Ascending aorta (tissue), 2 donors: ENCODE measurements at regions of chr4 and their contacts with region 1.

Region 1: GRCh38 chr4:158172261-158173258 is at the start of gene GASK1B:
- DNase-seq: no peak
- H3K4me3 ChIP-seq: peak within 1 kb of the TSS; percentile 68 to 88
- H3K27ac ChIP-seq: peak within 1 kb of the TSS; percentile 88 to 97
- H3K4me1 ChIP-seq: peaks cover 3 to 43% of the 10 kb centered on the region in 2 donors
- H3K27me3 ChIP-seq: no peaks in the 10 kb centered on the region
- CTCF ChIP-seq: peak; percentile 43 to 66 (median 46)
- total RNA-seq, gene GASK1B: 69.7 TPM

Region 2: DNA sequence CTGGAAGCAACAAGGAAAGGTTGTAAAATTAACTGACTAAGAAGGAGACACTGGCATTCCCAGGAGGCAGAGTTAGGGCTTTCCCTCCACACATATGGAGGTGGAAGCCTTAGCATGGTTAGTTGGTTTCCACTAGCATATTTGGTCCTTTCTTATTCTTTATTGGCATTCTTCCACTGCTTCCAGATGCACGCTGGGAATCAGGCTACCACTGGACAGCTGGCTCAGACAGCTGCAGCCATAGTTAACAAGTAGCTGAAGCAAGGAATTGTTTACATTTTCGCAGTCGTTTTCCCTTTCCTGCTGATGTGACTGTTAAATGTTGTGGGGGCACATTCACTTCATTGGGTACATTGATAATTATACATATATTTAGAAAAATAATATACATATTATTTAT is 782.8 kb before region 1 on chr4:
- intact Hi-C with region 1: loop called (anchors 5 kb)
- DNase-seq: no peak
- H3K4me3 ChIP-seq: no peak overlapping the region
- H3K27ac ChIP-seq: no peak overlapping the region
- H3K4me1 ChIP-seq: no peaks in the 10 kb centered on the region
- H3K27me3 ChIP-seq: no peaks in the 10 kb centered on the region
- CTCF ChIP-seq: no peak

Region 3: DNA sequence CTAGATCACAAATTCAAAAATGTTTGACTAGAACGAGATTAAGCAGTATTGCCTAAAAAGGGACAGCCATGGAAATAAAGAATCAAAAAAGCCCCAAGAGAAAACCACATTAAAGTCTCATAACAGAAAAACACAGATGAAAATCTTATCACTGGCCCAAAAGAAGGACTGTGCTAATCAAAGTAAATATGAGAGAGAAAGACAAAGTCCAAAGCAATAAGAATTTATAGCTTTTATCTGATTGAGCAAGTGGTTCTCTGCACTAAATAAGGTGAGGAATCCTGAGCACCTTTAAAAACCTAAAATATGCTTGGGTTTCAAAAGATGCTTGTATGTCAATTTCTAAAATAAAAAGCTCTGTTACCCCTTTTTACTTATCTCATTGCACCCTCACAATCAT is 409.1 kb before region 1 on chr4:
- intact Hi-C with region 1: no loop called
- DNase-seq: no peak
- H3K4me3 ChIP-seq: no peak overlapping the region
- H3K27ac ChIP-seq: no peak overlapping the region
- H3K4me1 ChIP-seq: no peaks in the 10 kb centered on the region
- H3K27me3 ChIP-seq: no peaks in the 10 kb centered on the region
- CTCF ChIP-seq: no peak

Region 4: GRCh38 chr4:158121187-158121586 is 51.4 kb before region 1 on chr4:
- intact Hi-C with region 1: loop called (anchors 2 kb)
- DNase-seq: peak in 1 of 2 donors; percentile 80
- H3K4me3 ChIP-seq: peak overlapping the region in 1 of 2 donors; percentile 50
- H3K27ac ChIP-seq: peak overlapping the region; percentile 69 to 78
- H3K4me1 ChIP-seq: peaks cover 0 to 21% of the 10 kb centered on the region in 2 donors
- H3K27me3 ChIP-seq: no peaks in the 10 kb centered on the region
- CTCF ChIP-seq: no peak

Region 5: GRCh38 chr4:158253350-158253980 is 80.9 kb after region 1 on chr4:
- intact Hi-C with region 1: loop called (anchors 5 kb)
- DNase-seq: peak in 1 of 2 donors; percentile 72
- H3K4me3 ChIP-seq: peak overlapping the region in 1 of 2 donors; percentile 2
- H3K27ac ChIP-seq: peak overlapping the region; percentile 40 to 49
- H3K4me1 ChIP-seq: no peaks in the 10 kb centered on the region
- H3K27me3 ChIP-seq: no peaks in the 10 kb centered on the region
- CTCF ChIP-seq: peak; percentile 47 to 73 (median 57)

Region 6: GRCh38 chr4:158671915-158672806 is 499.6 kb after region 1 on chr4 and contains the start of gene ETFDH:
- intact Hi-C with region 1: loop called (anchors 5 kb)
- DNase-seq: peak; percentile 98 to 100
- H3K4me3 ChIP-seq: peak within 1 kb of the TSS; percentile 69 to 87
- H3K27ac ChIP-seq: peak within 1 kb of the TSS; percentile 96 to 98
- H3K4me1 ChIP-seq: peaks cover 0 to 12% of the 10 kb centered on the region in 2 donors
- H3K27me3 ChIP-seq: no peaks in the 10 kb centered on the region
- CTCF ChIP-seq: peak; percentile 62 to 70 (median 65)
- total RNA-seq, gene ETFDH: 1.4 TPM